AG04449 (cell line): ENCODE measurements at regions of chr15 and their contacts with region 1.

Region 1: GRCh38 chr15:75723847-75724660 is 11.4 kb upstream of the CSPG4 start:
- DNase-seq: peak; percentile 76
- H3K4me3 ChIP-seq: no peak overlapping the region
- CTCF ChIP-seq: no peak

Region 2: DNA sequence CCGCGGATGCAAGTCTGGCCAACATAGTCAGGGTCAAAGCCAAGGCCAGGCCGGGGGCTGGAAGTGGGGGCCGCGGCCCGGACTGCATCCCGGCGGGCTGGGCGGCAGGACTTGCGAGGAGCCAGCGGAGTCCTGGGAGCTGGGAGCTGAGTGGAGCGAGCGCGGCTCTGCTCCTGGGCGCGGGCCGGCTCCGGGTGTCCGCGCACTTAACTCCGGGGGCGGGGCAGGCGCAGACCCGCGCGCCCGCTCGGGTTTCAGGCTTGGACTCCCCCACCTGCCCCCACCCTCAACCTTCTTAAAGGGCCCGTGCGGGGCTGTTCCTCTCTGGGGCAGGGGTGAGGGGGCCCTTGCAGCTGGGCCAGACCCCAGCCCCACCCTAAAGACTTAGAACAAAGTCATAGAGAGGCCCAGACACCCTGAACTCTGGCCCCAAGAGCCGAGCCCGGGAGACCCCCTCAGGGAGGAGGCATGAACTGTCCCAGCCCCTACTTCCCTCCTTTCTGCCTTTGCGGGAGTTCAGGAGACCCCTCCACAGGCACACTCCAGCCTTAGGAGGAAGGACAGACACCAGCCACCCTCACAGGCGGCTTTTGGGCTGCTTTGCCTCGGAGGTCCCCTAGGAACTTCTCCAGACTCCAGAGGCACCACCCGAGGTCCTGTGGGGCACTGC is 11.3 kb before region 1 on chr15 and contains the start of gene CSPG4:
- CTCF ChIA-PET with region 1: interaction called, 17 read pairs
- POLR2A ChIA-PET with region 1: interaction called, 6 read pairs
- DNase-seq: no peak
- H3K4me3 ChIP-seq: peak within 1 kb of the TSS; percentile 84
- CTCF ChIP-seq: no peak

Region 3: DNA sequence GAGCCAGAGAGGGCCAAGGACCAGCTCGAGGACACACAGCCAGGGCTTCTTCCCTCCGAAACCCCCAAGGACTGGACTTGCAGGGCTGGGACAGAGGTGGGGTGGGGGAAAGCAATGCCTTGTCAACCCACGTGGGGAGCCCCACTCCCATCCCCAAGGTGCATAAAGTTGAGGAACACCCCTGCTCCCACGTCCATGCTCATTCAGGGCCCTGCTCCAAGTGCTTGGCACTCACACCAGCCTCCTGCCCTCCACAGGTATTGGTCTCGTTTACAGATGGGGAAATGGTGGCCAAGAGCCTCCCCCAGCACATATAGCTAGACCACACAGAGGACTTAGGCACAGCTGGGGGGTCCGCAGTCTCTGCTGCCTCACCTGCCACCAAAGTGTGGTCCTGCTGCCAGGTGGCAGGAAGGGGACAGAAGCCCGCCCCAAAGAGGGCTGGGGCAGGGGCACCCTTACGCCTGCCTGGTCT is 39.1 kb after region 1 on chr15:
- CTCF ChIA-PET with region 1: no interaction called
- POLR2A ChIA-PET with region 1: no interaction called
- DNase-seq: no peak
- H3K4me3 ChIP-seq: no peak overlapping the region
- CTCF ChIP-seq: no peak